ENCODE measurements at regions of chr4 and their contacts with region 1.

Region 1: DNA sequence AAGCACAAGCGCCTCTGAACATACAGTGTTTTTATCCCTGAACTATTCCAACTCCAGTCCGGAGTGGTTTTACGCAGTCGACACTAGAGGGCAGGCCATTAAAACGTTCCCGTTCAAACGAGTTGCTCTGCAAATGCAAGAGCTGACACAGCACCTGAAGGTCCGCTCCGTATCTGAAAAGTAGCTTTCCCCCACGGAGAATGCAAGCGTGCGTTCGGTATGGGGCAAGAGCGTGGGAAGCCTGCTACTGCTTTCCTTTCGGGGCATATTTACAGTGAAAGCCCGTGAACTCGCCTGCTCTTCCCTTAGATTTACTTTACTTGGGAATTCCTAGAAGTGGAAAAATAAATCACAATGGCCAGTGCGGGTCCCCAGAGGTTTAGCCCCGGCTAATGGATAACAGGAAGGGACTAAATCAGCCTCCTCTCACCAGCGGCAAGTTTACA is 190.8 kb downstream of the TSPAN5 start:
- DNase-seq: peak; percentile 53 to 69
- H3K4me3 ChIP-seq: peak overlapping the region; percentile 59
- H3K27ac ChIP-seq: no peak overlapping the region
- H3K4me1 ChIP-seq: 0 out of 2 replicates have a peak, but pooled peaks cover 3% of the 10 kb centered on the region
- H3K27me3 ChIP-seq: no peaks in the 10 kb centered on the region
- CTCF ChIP-seq: peak; percentile 81

Region 2: GRCh38 chr4:98482847-98483806 is 15.5 kb after region 1 on chr4:
- CTCF ChIA-PET with region 1: no interaction called
- POLR2A ChIA-PET with region 1: no interaction called
- intact Hi-C with region 1: no loop called
- DNase-seq: peak in 1 of 2 experiments; percentile 38
- H3K4me3 ChIP-seq: no peak overlapping the region
- H3K27ac ChIP-seq: peak overlapping the region; percentile 57
- H3K4me1 ChIP-seq: peaks cover 58% of the 10 kb centered on the region
- H3K27me3 ChIP-seq: no peaks in the 10 kb centered on the region
- CTCF ChIP-seq: no peak

Region 3: DNA sequence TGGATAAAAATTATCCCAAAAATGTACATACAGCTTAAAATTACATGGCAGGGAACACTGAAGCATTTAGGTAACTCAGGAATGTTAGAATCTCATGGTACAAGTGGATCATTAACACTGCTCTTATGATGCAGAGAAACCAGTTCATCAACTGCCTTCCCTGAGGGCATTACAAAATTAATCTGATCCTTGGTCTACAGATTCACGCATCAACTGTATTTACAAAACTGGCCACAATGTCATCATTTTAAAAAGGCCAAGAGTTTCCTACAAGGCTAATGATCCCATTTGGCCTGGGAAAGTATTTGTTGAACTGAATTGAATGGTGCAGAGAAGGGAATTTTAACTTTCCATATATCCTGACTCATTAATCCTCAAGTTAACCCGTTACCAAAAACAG is 106.1 kb after region 1 on chr4:
- CTCF ChIA-PET with region 1: no interaction called
- POLR2A ChIA-PET with region 1: no interaction called
- intact Hi-C with region 1: loop called (anchors 5 kb)
- DNase-seq: peak; percentile 14 to 95
- H3K4me3 ChIP-seq: no peak overlapping the region; the same call in 1 of the 2 replicates
- H3K27ac ChIP-seq: peak overlapping the region; percentile 91
- H3K4me1 ChIP-seq: peaks cover 43% of the 10 kb centered on the region
- H3K27me3 ChIP-seq: no peaks in the 10 kb centered on the region
- CTCF ChIP-seq: no peak

Region 4: GRCh38 chr4:98658287-98659105 is 190.8 kb after region 1 on chr4 and contains the start of gene TSPAN5:
- CTCF ChIA-PET with region 1: no interaction called
- POLR2A ChIA-PET with region 1: no interaction called
- intact Hi-C with region 1: loop called (anchors 1 kb)
- DNase-seq: peak; percentile 65 to 78
- H3K4me3 ChIP-seq: peak within 1 kb of the TSS; percentile 95
- H3K27ac ChIP-seq: peak within 1 kb of the TSS; percentile 65
- H3K4me1 ChIP-seq: peaks cover 80% of the 10 kb centered on the region
- H3K27me3 ChIP-seq: no peaks in the 10 kb centered on the region
- CTCF ChIP-seq: no peak
- total RNA-seq, gene TSPAN5: 9.8 and 12.4 TPM in 2 replicates

Region 5: DNA sequence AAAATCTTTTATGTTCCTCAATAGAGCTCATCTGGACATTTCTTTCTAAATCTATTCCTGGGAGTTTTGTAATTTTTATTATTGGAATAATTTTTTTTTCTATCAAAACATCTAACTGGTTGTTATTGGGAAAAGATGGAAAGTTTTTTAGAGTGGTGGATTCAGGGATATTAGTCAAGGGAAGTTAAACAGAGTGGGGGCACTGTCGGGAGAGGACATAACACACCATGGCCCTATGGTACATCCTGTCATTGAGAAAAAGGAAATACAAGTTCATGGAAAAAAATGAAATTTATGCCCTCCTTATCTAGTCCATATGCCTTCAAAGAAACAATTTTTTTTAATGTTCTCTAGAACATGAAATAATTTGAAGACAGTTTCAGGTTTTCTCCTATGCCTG is 287.1 kb after region 1 on chr4:
- CTCF ChIA-PET with region 1: no interaction called
- POLR2A ChIA-PET with region 1: no interaction called
- intact Hi-C with region 1: loop called (anchors 5 kb)
- DNase-seq: no peak
- H3K4me3 ChIP-seq: no peak overlapping the region
- H3K27ac ChIP-seq: no peak overlapping the region
- H3K4me1 ChIP-seq: no peaks in the 10 kb centered on the region
- H3K27me3 ChIP-seq: no peaks in the 10 kb centered on the region
- CTCF ChIP-seq: no peak

Region 6: DNA sequence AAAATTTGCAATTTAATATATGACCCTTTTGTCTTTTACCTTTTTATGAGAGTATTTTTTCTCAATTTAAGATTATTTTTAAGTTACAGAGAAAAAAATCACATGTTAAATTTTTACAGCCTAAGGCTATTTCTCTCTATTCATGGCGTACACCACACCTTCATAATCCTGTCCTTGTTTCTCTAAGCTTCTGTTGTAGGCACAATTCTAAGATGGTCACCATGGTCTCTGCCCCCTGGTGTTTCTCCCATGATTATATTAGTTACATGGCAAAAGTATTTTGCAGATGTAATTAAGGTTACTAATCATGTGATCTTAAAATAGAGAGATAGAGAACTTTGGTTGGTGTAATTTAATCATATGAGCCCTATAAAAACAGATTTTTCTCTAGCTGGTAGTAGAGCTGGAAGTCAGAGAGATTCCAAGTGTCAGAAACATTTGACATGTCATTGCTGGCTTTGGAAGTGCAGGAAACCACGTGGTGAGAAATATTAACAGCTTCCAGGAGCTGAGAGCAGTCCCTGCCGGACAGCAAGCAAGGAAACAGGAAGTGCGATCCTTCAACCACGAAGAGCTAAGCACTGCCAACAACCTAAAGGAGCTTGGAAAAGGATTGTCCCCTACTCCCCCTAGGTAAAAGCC is 371.4 kb after region 1 on chr4:
- CTCF ChIA-PET with region 1: interaction called, 15 read pairs
- POLR2A ChIA-PET with region 1: no interaction called
- intact Hi-C with region 1: no loop called
- DNase-seq: no peak
- H3K4me3 ChIP-seq: no peak overlapping the region
- H3K27ac ChIP-seq: no peak overlapping the region
- H3K4me1 ChIP-seq: no peaks in the 10 kb centered on the region
- H3K27me3 ChIP-seq: no peaks in the 10 kb centered on the region
- CTCF ChIP-seq: no peak

Region 7: GRCh38 chr4:98995183-98996055 is 527.8 kb after region 1 on chr4 and contains the start of gene METAP1:
- CTCF ChIA-PET with region 1: no interaction called
- POLR2A ChIA-PET with region 1: no interaction called
- intact Hi-C with region 1: loop called (anchors 1 kb)
- DNase-seq: peak; percentile 88 to 92
- H3K4me3 ChIP-seq: peak within 1 kb of the TSS; percentile 65
- H3K27ac ChIP-seq: peak within 1 kb of the TSS; percentile 55
- H3K4me1 ChIP-seq: peaks cover 28% of the 10 kb centered on the region
- H3K27me3 ChIP-seq: no peaks in the 10 kb centered on the region
- CTCF ChIP-seq: peak; percentile 55
- total RNA-seq, gene METAP1: 36.7 and 42.0 TPM in 2 replicates

Region 8: GRCh38 chr4:99054428-99054994 is 586.9 kb after region 1 on chr4:
- CTCF ChIA-PET with region 1: interaction called, 4 read pairs
- POLR2A ChIA-PET with region 1: no interaction called
- intact Hi-C with region 1: loop called (anchors 2 kb)
- DNase-seq: no peak
- H3K4me3 ChIP-seq: no peak overlapping the region
- H3K27ac ChIP-seq: no peak overlapping the region
- H3K4me1 ChIP-seq: peaks cover 9% of the 10 kb centered on the region
- H3K27me3 ChIP-seq: no peaks in the 10 kb centered on the region
- CTCF ChIP-seq: no peak

Measured in PC-9 (cell line).